A549 (cell line): ENCODE measurements at regions of chr17 and their contacts with region 1.

Region 1: DNA sequence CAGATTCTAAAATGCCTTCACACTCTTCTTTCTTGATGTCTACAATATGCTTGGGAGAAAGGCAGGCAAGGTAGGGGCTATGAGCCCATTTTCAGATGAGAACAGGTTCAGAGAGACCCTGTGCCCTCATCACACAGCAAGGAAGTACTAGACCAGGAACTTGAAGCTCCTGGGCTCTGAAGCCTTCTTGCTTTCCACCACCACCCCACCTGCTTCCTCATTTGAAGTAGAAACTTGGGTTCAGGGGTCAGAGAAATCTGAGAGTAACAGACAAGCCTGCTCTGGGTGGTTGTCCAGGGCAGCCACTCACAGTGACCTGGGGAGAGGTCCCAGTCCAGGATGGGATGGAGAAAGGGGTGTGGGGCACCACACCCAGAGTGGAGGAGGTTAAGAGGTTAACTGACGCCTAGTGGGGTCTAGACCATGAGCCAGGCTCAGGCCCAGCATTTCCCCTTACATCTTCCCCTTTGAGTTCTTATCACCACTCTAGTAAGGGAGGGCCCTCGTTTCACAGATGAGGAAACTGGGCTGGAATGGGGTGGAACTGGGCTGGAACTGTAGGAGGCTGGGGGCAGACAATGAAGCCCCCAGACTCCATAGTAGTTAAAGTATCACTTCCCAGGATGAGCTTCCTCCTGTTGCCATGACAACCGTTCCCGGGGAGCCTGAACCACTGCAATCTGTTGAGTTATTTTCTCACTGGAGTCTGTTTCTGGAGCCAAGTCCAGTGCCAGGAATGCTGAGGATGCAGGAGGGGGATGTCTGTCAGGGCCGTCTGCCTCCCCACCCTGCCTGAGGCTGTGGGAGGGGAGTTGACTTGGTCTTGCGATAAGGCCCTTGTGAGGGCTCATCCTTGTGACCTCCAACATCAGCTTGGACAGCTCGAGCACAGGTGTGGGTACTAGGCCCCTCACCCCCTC is 16.2 kb upstream of the PHF12 start:
- DNase-seq: no peak
- ATAC-seq: no peak
- H3K4me3 ChIP-seq: no peak overlapping the region
- H3K27ac ChIP-seq: no peak overlapping the region
- H3K4me1 ChIP-seq: 0 out of 3 replicates have a peak, but pooled peaks cover 6% of the 10 kb centered on the region
- CTCF ChIP-seq: no peak
- EP300 ChIP-seq: no peak
- POLR2A ChIP-seq: no peak
- RAD21 ChIP-seq: no peak

Region 2: DNA sequence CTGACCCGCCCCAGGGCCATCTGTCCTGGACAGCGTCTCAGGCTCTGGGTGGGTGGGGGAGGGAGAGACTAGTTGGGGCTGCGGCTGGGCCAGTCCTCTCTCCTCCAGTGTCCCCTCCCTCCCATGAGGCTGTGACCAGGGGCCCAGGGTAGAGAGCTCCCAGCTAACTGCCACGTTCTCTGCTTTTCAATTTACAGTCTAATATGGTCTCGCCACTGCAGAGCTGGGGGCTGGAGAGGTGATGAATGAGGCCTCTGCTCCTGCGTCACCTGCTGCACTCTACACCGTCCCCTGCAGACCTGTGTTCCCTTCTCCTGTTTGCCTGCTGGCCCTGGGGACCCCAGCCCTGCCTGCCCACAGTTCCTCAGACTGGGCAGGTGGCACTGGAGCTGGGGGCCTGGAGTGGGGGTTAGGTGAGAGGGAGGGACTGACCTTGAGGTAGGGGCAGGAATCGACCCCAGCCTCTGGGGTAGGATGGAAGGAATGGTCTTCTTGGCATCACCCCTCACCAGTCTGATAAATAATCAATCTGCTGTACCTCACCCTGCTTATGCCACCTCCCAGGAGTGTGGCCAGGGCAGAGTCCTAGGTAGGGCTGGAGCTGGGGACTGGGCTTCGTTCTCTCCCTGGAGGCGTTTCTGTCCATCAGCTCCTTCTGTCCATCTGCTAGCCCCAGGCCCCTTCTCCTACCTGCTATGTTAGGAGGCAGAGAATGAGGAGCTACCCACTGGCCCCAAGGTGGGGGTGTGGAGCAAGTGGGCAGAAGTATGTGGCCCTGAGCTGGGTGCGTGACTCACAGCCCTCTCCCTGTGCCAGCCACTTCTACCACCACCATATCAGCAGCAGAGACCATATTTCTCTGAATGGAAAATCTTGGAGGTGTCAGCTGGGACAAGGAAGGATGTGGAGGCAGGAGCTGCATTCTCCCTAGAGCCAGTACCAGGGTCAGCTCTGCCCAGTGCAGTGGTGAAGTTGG is 25.4 kb after region 1 on chr17:
- CTCF ChIA-PET with region 1: interaction called, 31 read pairs
- POLR2A ChIA-PET with region 1: interaction called, 4 read pairs
- DNase-seq: peak in 1 of 2 experiments; percentile 32
- ATAC-seq: peak; percentile 53 to 68; a peak in 5 of 6 replicates
- H3K4me3 ChIP-seq: no peak overlapping the region
- H3K27ac ChIP-seq: no peak overlapping the region
- H3K4me1 ChIP-seq: no peaks in the 10 kb centered on the region
- CTCF ChIP-seq: no peak
- EP300 ChIP-seq: no peak
- POLR2A ChIP-seq: no peak
- RAD21 ChIP-seq: no peak

Region 3: GRCh38 chr17:29078183-29079045 is 110.9 kb after region 1 on chr17:
- CTCF ChIA-PET with region 1: interaction called, 16 read pairs
- POLR2A ChIA-PET with region 1: no interaction called
- DNase-seq: no peak
- ATAC-seq: 0 out of 6 replicates have a peak, but pooled peaks of 1 of the 2 experiments have one; percentile 12
- H3K4me3 ChIP-seq: no peak overlapping the region
- H3K27ac ChIP-seq: no peak overlapping the region
- H3K4me1 ChIP-seq: no peaks in the 10 kb centered on the region; the same call in 2 of the 3 replicates
- CTCF ChIP-seq: no peak
- EP300 ChIP-seq: no peak
- POLR2A ChIP-seq: no peak
- RAD21 ChIP-seq: no peak

Region 4: DNA sequence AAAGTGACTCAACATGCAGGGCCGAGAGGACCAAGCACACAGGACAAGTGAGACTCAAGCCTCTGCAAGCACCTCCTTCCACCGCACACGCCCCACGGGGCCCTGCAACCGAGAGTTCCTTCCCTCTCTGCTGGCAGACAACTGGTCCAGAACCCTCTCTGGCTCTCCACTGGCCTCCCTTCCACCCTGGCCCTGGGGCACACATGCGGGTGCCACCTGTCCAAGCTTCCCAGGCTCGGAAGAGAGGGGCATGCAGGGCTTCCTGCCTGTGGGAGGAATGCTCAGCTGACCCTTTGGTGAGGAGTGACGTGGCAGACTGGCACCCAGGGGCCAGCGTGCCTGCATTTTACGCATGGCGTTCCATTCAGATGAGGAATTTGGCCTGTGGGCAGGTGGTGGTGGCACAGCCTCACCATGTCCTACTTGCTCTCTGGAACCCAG is 135.3 kb after region 1 on chr17:
- CTCF ChIA-PET with region 1: interaction called, 1,025 read pairs
- POLR2A ChIA-PET with region 1: no interaction called
- DNase-seq: no peak
- ATAC-seq: no peak
- H3K4me3 ChIP-seq: no peak overlapping the region
- H3K27ac ChIP-seq: no peak overlapping the region
- H3K4me1 ChIP-seq: peaks cover 7% of the 10 kb centered on the region
- CTCF ChIP-seq: no peak
- EP300 ChIP-seq: no peak
- POLR2A ChIP-seq: no peak
- RAD21 ChIP-seq: no peak

Region 5: GRCh38 chr17:29140051-29140621 is 172.7 kb after region 1 on chr17:
- CTCF ChIA-PET with region 1: interaction called, 1,025 read pairs
- POLR2A ChIA-PET with region 1: no interaction called
- DNase-seq: no peak
- ATAC-seq: peak; percentile 51 to 83; a peak in 5 of 6 replicates
- H3K4me3 ChIP-seq: no peak overlapping the region
- H3K27ac ChIP-seq: peak overlapping the region in 1 of 2 experiments; percentile 69; a peak in 4 of 6 replicates
- H3K4me1 ChIP-seq: peaks cover 50% of the 10 kb centered on the region
- CTCF ChIP-seq: no peak
- EP300 ChIP-seq: no peak
- POLR2A ChIP-seq: no peak
- RAD21 ChIP-seq: no peak